ENCODE measurements at regions of chr22 and their contacts with region 1.

Region 1: DNA sequence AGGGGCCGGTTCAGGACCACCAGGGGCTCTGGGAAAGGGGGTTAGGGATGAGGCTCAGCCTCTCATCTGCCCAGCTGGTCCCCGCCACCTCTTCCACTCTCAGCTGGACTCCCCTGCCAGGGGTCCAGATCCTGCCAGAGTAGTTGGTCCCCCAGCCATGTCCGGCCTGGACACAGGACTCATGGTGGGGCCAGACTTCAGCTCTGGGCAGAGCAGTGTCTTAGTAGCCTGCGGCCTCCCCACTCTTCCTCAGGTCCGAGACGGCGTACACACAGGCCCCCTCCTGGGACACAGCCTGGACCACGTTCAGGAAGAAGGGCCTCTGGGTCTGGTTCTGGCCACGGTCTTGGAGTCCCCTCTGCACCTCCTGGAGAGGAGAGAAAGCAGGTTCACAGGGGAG is 25.1 kb downstream of the GGT5 start:
- DNase-seq: no peak
- ATAC-seq: no peak
- H3K4me3 ChIP-seq: no peak overlapping the region
- H3K27ac ChIP-seq: peak overlapping the region in 2 of 12 donors; percentile 26 to 42
- H3K4me1 ChIP-seq: no peaks in the 10 kb centered on the region
- H3K27me3 ChIP-seq: no peaks in the 10 kb centered on the region
- CTCF ChIP-seq: no peak
- POLR2A ChIP-seq: no peak

Region 2: GRCh38 chr22:23591201-23591791 is 628.5 kb before region 1 on chr22:
- intact Hi-C with region 1: no loop called
- DNase-seq: peak; percentile 24 to 73 (median 49)
- ATAC-seq: peak; percentile 47 to 70 (median 68)
- H3K4me3 ChIP-seq: no peak overlapping the region
- H3K27ac ChIP-seq: no peak overlapping the region
- H3K4me1 ChIP-seq: no peaks in the 10 kb centered on the region
- H3K27me3 ChIP-seq: no peaks in the 10 kb centered on the region
- CTCF ChIP-seq: peak; percentile 58 to 83 (median 73)
- POLR2A ChIP-seq: no peak

Region 3: GRCh38 chr22:24208012-24208749 is 11.6 kb before region 1 on chr22:
- intact Hi-C with region 1: loop called in 1 of 10 experiments (anchors 1 kb)
- DNase-seq: peak in 3 of 5 donors; percentile 56 to 68 (median 65)
- ATAC-seq: peak; percentile 85 to 97 (median 92)
- H3K4me3 ChIP-seq: peak overlapping the region in 2 of 12 donors; percentile 7 to 18
- H3K27ac ChIP-seq: peak overlapping the region; percentile 81 to 93 (median 86)
- H3K4me1 ChIP-seq: peaks cover 8 to 48% (median 23%) of the 10 kb centered on the region in 12 donors
- H3K27me3 ChIP-seq: no peaks in the 10 kb centered on the region
- CTCF ChIP-seq: no peak
- POLR2A ChIP-seq: peak in 1 of 2 donors; percentile 20

Region 4: GRCh38 chr22:24338726-24339451 is 119.1 kb after region 1 on chr22:
- intact Hi-C with region 1: no loop called
- DNase-seq: peak in 3 of 5 donors; percentile 21 to 41 (median 38)
- ATAC-seq: peak; percentile 63 to 93 (median 92)
- H3K4me3 ChIP-seq: no peak overlapping the region
- H3K27ac ChIP-seq: peak overlapping the region in 11 of 12 donors; percentile 13 to 68 (median 51)
- H3K4me1 ChIP-seq: peaks cover 0 to 21% (median 10%) of the 10 kb centered on the region in 12 donors
- H3K27me3 ChIP-seq: no peaks in the 10 kb centered on the region
- CTCF ChIP-seq: no peak
- POLR2A ChIP-seq: no peak

Measured in heart left ventricle (tissue), 16 donors.